ENCODE measurements at regions of chr4 and their contacts with region 1.

Region 1: GRCh38 chr4:164956766-164957643 is 20.5 kb downstream of the TRIM61 start:
- DNase-seq: peak; percentile 41 to 78 (median 59)
- ATAC-seq: peak; percentile 96
- H3K4me3 ChIP-seq: peak overlapping the region; percentile 69
- H3K4me3 Mint-ChIP-seq: peak overlapping the region; percentile 79 to 94 (median 91)
- H3K27ac ChIP-seq: no peak overlapping the region
- H3K27ac Mint-ChIP-seq: peak overlapping the region; percentile 70 to 88 (median 81)
- H3K4me1 ChIP-seq: no peaks in the 10 kb centered on the region
- H3K4me1 Mint-ChIP-seq: peaks cover 11 to 28% (median 21%) of the 10 kb centered on the region in 7 donors
- H3K27me3 ChIP-seq: no peaks in the 10 kb centered on the region
- H3K27me3 Mint-ChIP-seq: peaks cover 7 to 21% (median 12%) of the 10 kb centered on the region in 5 donors

Region 2: DNA sequence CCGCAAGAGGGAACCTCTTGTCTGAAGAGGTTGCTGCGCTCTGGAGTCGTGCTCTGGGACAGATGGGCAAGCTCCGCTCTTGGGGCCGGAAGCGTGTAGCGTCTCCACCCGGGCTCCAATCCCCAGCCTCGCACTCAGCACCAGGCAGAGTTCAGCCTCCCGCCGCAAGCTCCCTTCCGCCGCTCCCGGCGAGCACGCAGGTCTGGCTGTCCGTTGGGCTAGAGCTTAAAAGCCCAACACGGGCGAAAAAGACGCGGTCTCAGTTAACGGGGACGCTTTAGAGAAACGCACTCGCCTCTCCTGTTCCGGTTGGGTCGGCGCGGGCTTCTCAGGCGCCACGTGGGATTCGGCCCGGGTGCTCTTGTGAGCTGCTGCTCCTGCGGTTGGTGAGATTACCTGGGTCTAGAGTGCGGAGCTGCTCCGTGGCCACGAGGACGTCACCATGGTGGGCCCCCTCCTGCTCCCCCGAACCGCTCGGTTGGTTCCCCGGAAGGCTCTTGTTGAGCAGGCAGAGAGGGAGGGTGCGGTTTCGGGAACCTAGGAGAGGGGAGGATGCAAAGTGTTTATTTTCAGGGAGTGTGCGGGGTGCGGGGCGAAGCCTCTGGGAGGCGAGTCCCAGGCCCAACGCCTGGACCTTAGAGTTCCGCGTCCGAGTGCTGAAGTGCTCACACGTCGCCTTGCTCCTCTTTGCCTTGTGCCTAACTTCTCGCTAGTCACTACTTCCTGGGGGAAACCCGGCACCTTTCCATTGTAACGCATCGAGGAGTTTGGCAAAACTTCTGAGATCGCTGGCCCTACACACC is 1462.4 kb before region 1 on chr4 and contains the start of gene TMA16:
- CTCF ChIA-PET with region 1: no interaction called
- POLR2A ChIA-PET with region 1: no interaction called
- intact Hi-C with region 1: loop called (anchors 2 kb)
- DNase-seq: peak; percentile 56 to 87 (median 76)
- ATAC-seq: peak; percentile 89
- H3K4me3 ChIP-seq: peak within 1 kb of the TSS; percentile 94
- H3K4me3 Mint-ChIP-seq: peak within 1 kb of the TSS; percentile 92 to 100 (median 98)
- H3K27ac ChIP-seq: peak within 1 kb of the TSS; percentile 83
- H3K27ac Mint-ChIP-seq: peak within 1 kb of the TSS; percentile 78 to 99 (median 96)
- H3K4me1 ChIP-seq: peaks cover 7% of the 10 kb centered on the region in 2 donors
- H3K4me1 Mint-ChIP-seq: peaks cover 20 to 44% (median 36%) of the 10 kb centered on the region in 7 donors
- H3K27me3 ChIP-seq: no peaks in the 10 kb centered on the region
- H3K27me3 Mint-ChIP-seq: peaks cover 0 to 12% (median 5%) of the 10 kb centered on the region in 5 donors
- total RNA-seq, gene TMA16: 10.5 to 38.7 (median 20.7) TPM

Region 3: GRCh38 chr4:164977243-164978164 is 20.5 kb after region 1 on chr4 and contains the start of gene TRIM61:
- CTCF ChIA-PET with region 1: no interaction called
- POLR2A ChIA-PET with region 1: interaction called, 4 read pairs
- intact Hi-C with region 1: loop called (anchors 1 to 2 kb)
- DNase-seq: peak in 7 of 9 donors; percentile 9 to 73 (median 29)
- ATAC-seq: peak; percentile 78
- H3K4me3 ChIP-seq: peak within 1 kb of the TSS; percentile 67
- H3K4me3 Mint-ChIP-seq: peak within 1 kb of the TSS; percentile 66 to 89 (median 82)
- H3K27ac ChIP-seq: no peak within 1 kb of the TSS
- H3K27ac Mint-ChIP-seq: peak within 1 kb of the TSS; percentile 23 to 91 (median 71)
- H3K4me1 ChIP-seq: no peaks in the 10 kb centered on the region
- H3K4me1 Mint-ChIP-seq: peaks cover 5 to 23% (median 12%) of the 10 kb centered on the region in 7 donors
- H3K27me3 ChIP-seq: no peaks in the 10 kb centered on the region
- H3K27me3 Mint-ChIP-seq: peaks cover 0 to 7% (median 0%) of the 10 kb centered on the region in 5 donors
- total RNA-seq, gene TRIM61: 0.34 to 4.0 (median 1.1) TPM

Region 4: GRCh38 chr4:165489786-165490185 is 532.8 kb after region 1 on chr4:
- CTCF ChIA-PET with region 1: no interaction called
- POLR2A ChIA-PET with region 1: no interaction called
- intact Hi-C with region 1: no loop called
- DNase-seq: no peak
- ATAC-seq: no peak
- H3K4me3 ChIP-seq: no peak overlapping the region
- H3K4me3 Mint-ChIP-seq: no peak overlapping the region
- H3K27ac ChIP-seq: no peak overlapping the region
- H3K27ac Mint-ChIP-seq: no peak overlapping the region
- H3K4me1 ChIP-seq: no peaks in the 10 kb centered on the region
- H3K4me1 Mint-ChIP-seq: peaks cover 3 to 8% (median 4%) of the 10 kb centered on the region in 7 donors
- H3K27me3 ChIP-seq: peaks cover 0 to 3% of the 10 kb centered on the region in 2 donors
- H3K27me3 Mint-ChIP-seq: peaks cover 21 to 44% (median 42%) of the 10 kb centered on the region in 5 donors

Measured in naive thymus-derived CD4-positive, alpha-beta T cell (primary cell).